ENCODE measurements at regions of chr15 and their contacts with region 1.

Region 1: DNA sequence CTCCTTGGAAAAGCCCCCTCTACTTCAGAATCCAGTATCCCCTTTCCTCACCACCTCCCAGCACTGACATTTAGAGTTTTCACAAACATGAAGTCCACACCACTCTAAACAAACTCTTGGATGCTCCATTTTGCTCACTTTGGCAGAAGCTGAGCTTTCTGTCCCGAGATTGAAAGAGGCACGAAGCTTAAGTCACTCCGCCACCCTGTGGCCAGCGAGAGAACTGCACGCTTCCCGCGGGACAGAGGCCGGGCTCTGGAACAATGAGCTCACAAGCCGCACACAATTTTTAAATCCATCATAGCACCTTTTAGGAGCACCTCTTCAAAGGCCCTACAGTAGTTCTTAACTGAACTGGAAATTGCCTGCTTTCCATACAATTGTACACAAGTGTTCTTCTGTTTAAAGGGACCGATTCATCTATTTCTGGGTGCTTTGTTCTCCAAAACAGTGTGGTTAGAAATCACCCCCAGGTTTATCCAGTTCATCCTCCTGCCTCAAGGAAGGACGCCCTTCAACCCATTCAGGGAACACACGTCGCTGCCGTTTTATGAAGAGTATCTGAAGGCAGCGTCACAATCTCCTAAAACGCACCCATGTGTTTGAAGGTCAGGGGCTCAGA is 226.1 kb downstream of the VPS13C start:
- DNase-seq: peak; percentile 86 to 94
- H3K4me3 ChIP-seq: no peak overlapping the region
- H3K4me1 ChIP-seq: no peaks in the 10 kb centered on the region
- H3K27me3 ChIP-seq: no peaks in the 10 kb centered on the region

Region 2: GRCh38 chr15:60592371-60593169 is 1241.6 kb before region 1 on chr15:
- in situ Hi-C with region 1: loop called (anchors 25 kb)
- DNase-seq: peak; percentile 83 to 90
- H3K4me3 ChIP-seq: peak overlapping the region; percentile 51
- H3K4me1 ChIP-seq: peaks cover 25% of the 10 kb centered on the region
- H3K27me3 ChIP-seq: no peaks in the 10 kb centered on the region